ENCODE measurements at regions of chr9 and their contacts with region 1.

Region 1: GRCh38 chr9:18297550-18297908 is 176.4 kb upstream of the ADAMTSL1 start:
- DNase-seq: no peak
- H3K4me3 ChIP-seq: no peak overlapping the region
- H3K27ac ChIP-seq: no peak overlapping the region
- H3K4me1 ChIP-seq: no peaks in the 10 kb centered on the region
- H3K27me3 ChIP-seq: no peaks in the 10 kb centered on the region
- CTCF ChIP-seq: no peak
- EP300 ChIP-seq: no peak
- POLR2A ChIP-seq: no peak

Region 2: DNA sequence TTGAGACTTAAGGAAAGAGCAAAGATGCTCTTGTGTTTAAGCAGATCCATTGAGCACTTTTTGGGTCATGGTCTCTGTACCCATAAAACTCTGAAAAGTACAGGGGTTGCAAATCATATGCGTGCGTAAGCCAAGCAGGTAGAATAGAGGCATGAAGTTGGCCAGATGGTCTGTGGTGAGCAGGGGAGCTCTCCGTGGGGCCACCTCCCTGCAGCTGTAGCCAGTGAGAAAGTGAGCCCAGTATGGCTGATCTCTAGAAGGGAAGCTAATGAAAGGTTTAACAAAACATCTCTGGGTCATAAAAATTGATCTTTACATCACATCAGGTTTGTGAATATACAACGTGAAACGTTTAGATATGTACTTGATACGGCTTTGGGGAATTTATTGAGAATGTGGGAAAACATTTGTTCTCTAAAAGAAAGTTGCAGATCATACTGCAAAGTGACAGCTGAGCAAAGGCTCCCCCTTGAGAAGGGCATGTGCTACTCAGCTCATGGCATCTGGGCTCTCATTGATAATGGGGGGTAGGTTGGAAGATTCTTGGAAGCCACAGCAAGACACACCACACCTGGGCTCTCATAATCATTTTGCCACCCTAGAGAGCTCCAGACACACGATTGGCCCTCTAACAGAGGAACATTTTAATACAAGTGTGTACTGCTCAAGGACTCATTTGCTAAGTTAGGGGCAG is 688.1 kb before region 1 on chr9:
- in situ Hi-C with region 1: no loop called
- intact Hi-C with region 1: loop called (anchors 5 kb)
- DNase-seq: no peak
- H3K4me3 ChIP-seq: no peak overlapping the region
- H3K27ac ChIP-seq: no peak overlapping the region
- H3K4me1 ChIP-seq: no peaks in the 10 kb centered on the region
- H3K27me3 ChIP-seq: no peaks in the 10 kb centered on the region
- CTCF ChIP-seq: no peak
- EP300 ChIP-seq: no peak
- POLR2A ChIP-seq: no peak

Region 3: GRCh38 chr9:19313573-19313972 is 1016.0 kb after region 1 on chr9:
- in situ Hi-C with region 1: no loop called
- intact Hi-C with region 1: loop called (anchors 5 kb)
- DNase-seq: no peak
- H3K4me3 ChIP-seq: no peak overlapping the region
- H3K27ac ChIP-seq: no peak overlapping the region
- H3K4me1 ChIP-seq: no peaks in the 10 kb centered on the region
- H3K27me3 ChIP-seq: no peaks in the 10 kb centered on the region
- CTCF ChIP-seq: no peak
- EP300 ChIP-seq: no peak
- POLR2A ChIP-seq: no peak